ENCODE measurements at regions of chr3 and their contacts with region 1.

Region 1: DNA sequence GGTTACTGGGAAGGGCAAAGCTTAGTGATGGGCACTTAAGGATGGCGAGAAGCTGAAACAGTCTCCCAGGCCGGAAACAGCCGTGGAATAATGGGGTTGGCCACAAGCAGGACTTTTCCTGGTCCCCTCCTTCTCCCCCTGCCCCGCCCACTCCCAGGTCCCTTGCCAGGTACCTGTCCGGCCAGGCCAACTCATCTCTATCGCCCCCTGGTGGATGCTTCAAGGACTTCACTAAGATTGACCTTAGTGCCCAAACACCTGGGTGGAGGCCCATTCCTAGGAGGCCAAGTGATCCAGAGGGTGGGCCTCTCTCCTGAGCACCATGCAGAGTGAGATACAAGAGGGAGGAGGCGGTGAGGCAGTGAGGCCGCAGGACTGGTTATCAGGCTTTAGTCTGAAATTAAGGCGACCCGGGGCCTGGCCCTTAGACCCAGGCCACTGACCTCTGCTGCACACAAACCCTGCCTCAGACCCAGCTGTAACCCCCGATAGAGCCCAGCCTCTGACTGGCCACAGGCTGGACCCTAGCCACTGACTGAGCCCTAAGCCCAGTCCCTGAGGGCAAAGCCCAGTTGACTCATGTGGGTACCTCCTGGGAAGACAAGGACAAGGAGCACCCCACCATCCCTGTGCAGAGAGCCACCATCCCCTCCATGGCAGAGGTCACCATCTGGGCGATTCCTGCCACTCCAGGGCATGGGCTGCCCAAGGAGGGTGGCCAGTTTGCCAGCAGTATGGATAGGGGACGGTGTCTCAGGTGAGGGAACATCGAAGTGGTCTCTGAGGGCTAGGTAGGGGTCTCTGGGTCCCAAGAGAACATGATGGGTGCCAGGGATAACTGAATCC is 37.6 kb downstream of the VIPR1 start:
- DNase-seq: peak; percentile 36 to 77 (median 56)
- H3K4me3 ChIP-seq: no peak overlapping the region
- H3K4me3 Mint-ChIP-seq: no peak overlapping the region
- H3K27ac ChIP-seq: no peak overlapping the region
- H3K27ac Mint-ChIP-seq: peak overlapping the region in 2 of 8 donors; percentile 12 to 35
- H3K4me1 ChIP-seq: peaks cover 11% of the 10 kb centered on the region
- H3K4me1 Mint-ChIP-seq: peaks cover 9 to 21% (median 16%) of the 10 kb centered on the region in 3 donors
- H3K27me3 ChIP-seq: no peaks in the 10 kb centered on the region
- H3K27me3 Mint-ChIP-seq: no peaks in the 10 kb centered on the region

Region 2: DNA sequence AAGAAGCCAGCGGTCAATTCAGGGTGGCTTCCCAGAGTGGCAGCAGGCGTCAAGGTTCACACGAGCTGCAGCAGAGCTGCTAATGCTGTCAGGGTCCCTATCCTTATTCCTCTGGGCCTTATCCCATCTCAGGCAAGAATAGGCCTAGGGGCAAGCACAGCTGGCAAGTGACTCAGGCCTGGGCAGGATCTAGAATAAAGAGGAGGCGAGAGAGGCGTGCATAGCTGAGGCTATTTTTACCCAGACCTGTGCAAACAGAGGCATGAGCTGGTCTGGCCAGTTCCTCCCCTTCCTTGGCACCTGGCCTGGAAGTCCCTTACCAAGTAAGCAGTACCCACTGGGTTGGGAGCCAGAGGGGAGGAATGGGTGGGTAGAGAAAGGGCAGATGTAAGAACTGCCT is 49.8 kb before region 1 on chr3:
- CTCF ChIA-PET with region 1: no interaction called
- POLR2A ChIA-PET with region 1: no interaction called
- DNase-seq: no peak
- H3K4me3 ChIP-seq: no peak overlapping the region
- H3K4me3 Mint-ChIP-seq: no peak overlapping the region
- H3K27ac ChIP-seq: no peak overlapping the region
- H3K27ac Mint-ChIP-seq: peak overlapping the region in 1 of 8 donors; percentile 55
- H3K4me1 ChIP-seq: no peaks in the 10 kb centered on the region
- H3K4me1 Mint-ChIP-seq: no peaks in the 10 kb centered on the region
- H3K27me3 ChIP-seq: no peaks in the 10 kb centered on the region
- H3K27me3 Mint-ChIP-seq: peaks cover 0 to 5% of the 10 kb centered on the region in 2 donors

Region 3: GRCh38 chr3:42518800-42519567 is 21.1 kb before region 1 on chr3:
- CTCF ChIA-PET with region 1: interaction called, 16 read pairs
- POLR2A ChIA-PET with region 1: no interaction called
- DNase-seq: peak; percentile 31 to 62 (median 47)
- H3K4me3 ChIP-seq: no peak overlapping the region
- H3K4me3 Mint-ChIP-seq: peak overlapping the region in 3 of 7 donors; percentile 11 to 70 (median 51)
- H3K27ac ChIP-seq: no peak overlapping the region
- H3K27ac Mint-ChIP-seq: peak overlapping the region in 7 of 8 donors; percentile 23 to 94 (median 78)
- H3K4me1 ChIP-seq: peaks cover 23% of the 10 kb centered on the region
- H3K4me1 Mint-ChIP-seq: peaks cover 25 to 33% (median 28%) of the 10 kb centered on the region in 3 donors
- H3K27me3 ChIP-seq: no peaks in the 10 kb centered on the region
- H3K27me3 Mint-ChIP-seq: no peaks in the 10 kb centered on the region

Region 4: GRCh38 chr3:42526616-42527367 is 13.3 kb before region 1 on chr3:
- CTCF ChIA-PET with region 1: interaction called, 16 read pairs
- POLR2A ChIA-PET with region 1: no interaction called
- DNase-seq: peak; percentile 10 to 54 (median 30)
- H3K4me3 ChIP-seq: no peak overlapping the region
- H3K4me3 Mint-ChIP-seq: peak overlapping the region in 6 of 7 donors; percentile 23 to 80 (median 61)
- H3K27ac ChIP-seq: no peak overlapping the region
- H3K27ac Mint-ChIP-seq: peak overlapping the region; percentile 85 to 94 (median 90)
- H3K4me1 ChIP-seq: peaks cover 62% of the 10 kb centered on the region
- H3K4me1 Mint-ChIP-seq: peaks cover 52 to 70% (median 68%) of the 10 kb centered on the region in 3 donors
- H3K27me3 ChIP-seq: no peaks in the 10 kb centered on the region
- H3K27me3 Mint-ChIP-seq: no peaks in the 10 kb centered on the region

Region 5: DNA sequence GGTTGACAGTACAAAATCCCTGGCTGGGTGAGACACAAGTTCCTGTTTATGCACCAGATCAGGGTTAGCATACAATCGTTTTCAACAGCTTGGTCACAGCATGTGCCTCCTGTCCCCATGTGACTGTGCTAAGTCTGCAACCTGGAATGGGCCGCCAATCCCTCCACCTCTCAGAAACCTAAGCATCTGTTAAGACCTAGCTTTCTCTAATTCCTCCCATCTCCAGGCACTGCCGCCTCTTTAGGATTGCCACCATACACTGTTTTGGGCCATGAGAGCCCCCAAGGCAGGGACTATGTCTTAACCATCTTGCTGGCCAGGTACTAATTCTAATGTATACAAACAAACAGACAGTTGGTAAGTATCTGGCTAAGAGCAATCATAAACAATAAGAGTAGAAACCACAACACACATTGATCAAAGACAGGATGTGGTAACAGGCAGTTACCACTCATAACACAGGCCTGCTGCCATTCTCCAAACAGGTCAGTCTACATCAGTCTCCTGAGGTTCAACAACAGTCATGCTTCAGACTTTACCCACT is 16.1 kb after region 1 on chr3:
- CTCF ChIA-PET with region 1: interaction called, 20 read pairs
- POLR2A ChIA-PET with region 1: no interaction called
- DNase-seq: peak; percentile 9 to 77 (median 62)
- H3K4me3 ChIP-seq: peak overlapping the region; percentile 8
- H3K4me3 Mint-ChIP-seq: peak overlapping the region; percentile 19 to 82 (median 69)
- H3K27ac ChIP-seq: peak overlapping the region; percentile 21
- H3K27ac Mint-ChIP-seq: peak overlapping the region; percentile 86 to 98 (median 95)
- H3K4me1 ChIP-seq: peaks cover 22% of the 10 kb centered on the region
- H3K4me1 Mint-ChIP-seq: peaks cover 34 to 50% (median 50%) of the 10 kb centered on the region in 3 donors
- H3K27me3 ChIP-seq: no peaks in the 10 kb centered on the region
- H3K27me3 Mint-ChIP-seq: no peaks in the 10 kb centered on the region